ENCODE measurements at regions of chr1 and their contacts with region 1.

Region 1: GRCh38 chr1:156456622-156457465 is 43.7 kb downstream of the MEF2D start:
- DNase-seq: peak; percentile 99
- H3K4me3 ChIP-seq: peak overlapping the region; percentile 34 to 45
- H3K27ac ChIP-seq: peak overlapping the region; percentile 99 to 100
- H3K4me1 ChIP-seq: no peaks in the 10 kb centered on the region
- H3K27me3 ChIP-seq: no peaks in the 10 kb centered on the region
- CTCF ChIP-seq: no peak
- POLR2A ChIP-seq: peak; percentile 95

Region 2: GRCh38 chr1:156476501-156477298 is 19.9 kb after region 1 on chr1:
- intact Hi-C with region 1: loop called (anchors 1 kb)
- DNase-seq: no peak
- H3K4me3 ChIP-seq: no peak overlapping the region
- H3K27ac ChIP-seq: peak overlapping the region; percentile 81 to 92
- H3K4me1 ChIP-seq: peaks cover 25% of the 10 kb centered on the region
- H3K27me3 ChIP-seq: no peaks in the 10 kb centered on the region
- CTCF ChIP-seq: no peak
- POLR2A ChIP-seq: no peak

Region 3: GRCh38 chr1:156500797-156501499 is 44.1 kb after region 1 on chr1:
- intact Hi-C with region 1: loop called (anchors 1 kb)
- DNase-seq: peak; percentile 96
- H3K4me3 ChIP-seq: peak overlapping the region; percentile 87 to 88
- H3K27ac ChIP-seq: peak overlapping the region; percentile 99 to 100
- H3K4me1 ChIP-seq: peaks cover 29% of the 10 kb centered on the region
- H3K27me3 ChIP-seq: no peaks in the 10 kb centered on the region
- CTCF ChIP-seq: peak; percentile 46 to 76 (median 68)
- POLR2A ChIP-seq: peak; percentile 81

Region 4: DNA sequence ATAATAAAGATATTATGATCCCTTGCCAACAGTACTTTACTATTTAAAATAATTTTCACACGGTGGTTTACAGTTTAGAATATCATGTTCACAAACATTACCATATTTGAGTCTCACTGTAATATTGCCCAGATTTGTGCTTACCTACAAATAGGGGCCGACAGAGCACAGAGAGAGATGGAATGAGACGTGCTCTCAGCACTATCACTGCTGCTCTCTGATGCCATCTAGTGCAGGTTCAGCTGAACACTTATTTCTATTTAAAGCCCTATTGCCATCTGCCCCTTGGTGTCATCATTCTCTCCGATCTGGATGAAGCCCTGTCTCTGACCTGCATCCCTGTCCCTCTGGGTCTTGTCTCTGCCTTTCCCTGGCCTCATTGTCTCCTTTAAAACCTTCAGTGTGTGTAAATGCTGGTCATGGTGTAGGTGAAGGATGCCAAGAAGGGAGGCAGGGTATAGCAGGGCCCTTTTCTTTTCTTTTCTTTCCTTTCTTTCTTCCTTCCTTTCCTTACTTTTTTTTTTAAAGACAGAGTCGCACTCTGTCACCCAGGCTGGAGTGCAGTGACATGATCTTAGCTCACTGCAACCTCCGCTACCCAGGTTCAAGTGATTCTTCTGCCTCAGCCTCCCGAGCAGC is 151.3 kb after region 1 on chr1:
- intact Hi-C with region 1: loop called (anchors 5 kb)
- DNase-seq: peak; percentile 62
- H3K4me3 ChIP-seq: no peak overlapping the region
- H3K27ac ChIP-seq: no peak overlapping the region
- H3K4me1 ChIP-seq: no peaks in the 10 kb centered on the region
- H3K27me3 ChIP-seq: no peaks in the 10 kb centered on the region
- CTCF ChIP-seq: peak in 3 of 4 experiments; percentile 65 to 90 (median 80)
- POLR2A ChIP-seq: no peak

Measured in prostate gland (tissue), 2 donors.